Vagina (tissue), 2 donors: ENCODE measurements at regions of chr1 and their contacts with region 1.

Region 1: DNA sequence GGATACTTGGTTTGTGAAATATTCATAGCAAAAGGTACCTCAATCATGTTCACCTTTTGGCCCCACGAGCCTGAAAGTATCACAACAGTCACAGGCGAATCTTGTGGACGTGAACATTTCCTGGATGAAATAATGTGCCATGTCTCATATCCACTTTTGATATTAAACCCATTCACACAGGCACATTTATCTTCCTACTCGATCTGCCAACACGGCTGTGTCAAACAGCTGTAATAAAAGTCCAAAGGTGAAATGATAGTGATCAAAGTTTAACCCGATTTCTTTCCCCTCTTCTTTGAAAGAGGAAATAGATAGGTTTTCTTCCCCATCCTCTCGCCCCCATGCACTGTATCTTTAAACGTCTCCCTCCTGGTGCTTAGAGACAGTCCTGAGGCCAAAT is 191.2 kb upstream of the PROX1 start:
- DNase-seq: no peak
- H3K4me3 ChIP-seq: no peak overlapping the region
- H3K27ac ChIP-seq: no peak overlapping the region
- H3K4me1 ChIP-seq: no peaks in the 10 kb centered on the region
- H3K27me3 ChIP-seq: no peaks in the 10 kb centered on the region
- CTCF ChIP-seq: no peak
- POLR2A ChIP-seq: no peak

Region 2: DNA sequence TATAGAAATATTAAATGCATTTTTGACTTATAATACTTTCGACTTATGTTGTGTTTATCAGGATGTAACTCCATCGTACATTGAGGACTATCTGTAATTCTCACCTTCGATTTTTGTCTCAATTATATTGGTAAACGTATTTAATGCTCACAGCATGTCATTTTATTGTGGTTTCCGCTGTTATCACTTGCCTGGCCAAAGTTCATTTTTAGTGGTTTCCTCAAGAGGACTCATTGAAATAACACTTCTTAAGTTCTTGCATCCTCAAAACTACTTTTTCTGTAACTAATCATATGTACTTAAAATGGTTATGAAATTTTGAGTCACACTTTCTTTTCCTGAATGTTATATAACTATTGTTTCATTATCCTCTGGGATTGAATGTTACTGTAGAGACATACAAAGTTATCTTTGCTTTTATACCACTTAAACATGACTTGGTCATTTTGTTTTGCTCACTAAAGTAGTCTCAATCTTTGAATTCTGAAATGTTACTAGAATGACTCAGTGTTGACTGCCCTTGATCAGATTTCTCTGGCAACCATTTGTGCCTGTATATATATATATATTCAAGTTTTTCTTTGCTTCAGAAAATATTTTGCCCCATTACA is 98.3 kb before region 1 on chr1:
- intact Hi-C with region 1: no loop called
- DNase-seq: no peak
- H3K4me3 ChIP-seq: no peak overlapping the region
- H3K27ac ChIP-seq: no peak overlapping the region
- H3K4me1 ChIP-seq: no peaks in the 10 kb centered on the region
- H3K27me3 ChIP-seq: no peaks in the 10 kb centered on the region
- CTCF ChIP-seq: no peak
- POLR2A ChIP-seq: no peak

Region 3: GRCh38 chr1:213759359-213760181 is 37.0 kb before region 1 on chr1:
- intact Hi-C with region 1: loop called (anchors 2 kb)
- DNase-seq: no peak
- H3K4me3 ChIP-seq: no peak overlapping the region
- H3K27ac ChIP-seq: no peak overlapping the region
- H3K4me1 ChIP-seq: no peaks in the 10 kb centered on the region
- H3K27me3 ChIP-seq: no peaks in the 10 kb centered on the region
- CTCF ChIP-seq: no peak
- POLR2A ChIP-seq: no peak